ENCODE measurements at regions of chr1 and their contacts with region 1.

Region 1: GRCh38 chr1:89454845-89455521 is 69.6 kb upstream of the LRRC8B start:
- DNase-seq: peak; percentile 77
- ATAC-seq: peak; percentile 71
- H3K4me3 Mint-ChIP-seq: no peak overlapping the region
- H3K27ac Mint-ChIP-seq: no peak overlapping the region
- H3K4me1 Mint-ChIP-seq: peaks cover 13% of the 10 kb centered on the region
- H3K27me3 Mint-ChIP-seq: peaks cover 21% of the 10 kb centered on the region

Region 2: DNA sequence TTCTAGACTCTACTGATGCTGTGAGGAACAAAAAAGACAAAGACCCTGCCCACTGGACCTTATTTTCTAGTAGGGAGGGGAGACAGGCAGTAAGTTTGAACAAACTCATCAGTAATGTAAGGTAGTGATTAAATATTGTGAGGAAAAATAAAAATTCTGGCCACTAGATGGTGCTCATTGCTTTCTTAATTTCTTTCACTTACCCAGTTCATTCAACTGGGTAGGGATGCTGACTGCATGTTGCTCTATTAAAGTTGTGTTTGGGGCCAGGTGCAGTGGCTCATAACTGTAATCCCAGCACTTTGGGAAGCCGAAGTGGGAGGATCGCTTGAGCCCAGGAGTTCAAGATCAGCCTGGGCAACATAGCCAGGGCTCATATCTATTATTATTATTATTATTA is 456.3 kb before region 1 on chr1:
- CTCF ChIA-PET with region 1: interaction called, 11 read pairs
- DNase-seq: peak; percentile 50
- ATAC-seq: peak; percentile 94
- H3K4me3 Mint-ChIP-seq: no peak overlapping the region
- H3K27ac Mint-ChIP-seq: no peak overlapping the region
- H3K4me1 Mint-ChIP-seq: peaks cover 29% of the 10 kb centered on the region
- H3K27me3 Mint-ChIP-seq: no peaks in the 10 kb centered on the region